PC-9 (cell line): ENCODE measurements at regions of chr1 and their contacts with region 1.

Region 1: GRCh38 chr1:234599617-234600417 is 10.2 kb downstream of the IRF2BP2 start:
- DNase-seq: peak; percentile 69 to 89
- H3K4me3 ChIP-seq: peak overlapping the region; percentile 62
- H3K27ac ChIP-seq: peak overlapping the region; percentile 99
- H3K4me1 ChIP-seq: peaks cover 61% of the 10 kb centered on the region
- H3K27me3 ChIP-seq: no peaks in the 10 kb centered on the region
- CTCF ChIP-seq: no peak; the same call in 1 of the 2 replicates

Region 2: GRCh38 chr1:234486498-234487448 is 113.0 kb before region 1 on chr1:
- CTCF ChIA-PET with region 1: no interaction called
- POLR2A ChIA-PET with region 1: no interaction called
- intact Hi-C with region 1: loop called (anchors 1 kb)
- DNase-seq: peak; percentile 49 to 73
- H3K4me3 ChIP-seq: no peak overlapping the region
- H3K27ac ChIP-seq: 0 out of 2 replicates have a peak overlapping the region, but pooled peaks have one; percentile 26
- H3K4me1 ChIP-seq: peaks cover 35% of the 10 kb centered on the region
- H3K27me3 ChIP-seq: no peaks in the 10 kb centered on the region
- CTCF ChIP-seq: peak; percentile 71

Region 3: GRCh38 chr1:234525156-234525799 is 74.5 kb before region 1 on chr1:
- CTCF ChIA-PET with region 1: no interaction called
- POLR2A ChIA-PET with region 1: interaction called, 14 read pairs
- intact Hi-C with region 1: no loop called
- DNase-seq: no peak
- H3K4me3 ChIP-seq: no peak overlapping the region
- H3K27ac ChIP-seq: no peak overlapping the region
- H3K4me1 ChIP-seq: peaks cover 39% of the 10 kb centered on the region
- H3K27me3 ChIP-seq: no peaks in the 10 kb centered on the region
- CTCF ChIP-seq: no peak

Region 4: GRCh38 chr1:234572961-234573360 is 26.9 kb before region 1 on chr1:
- CTCF ChIA-PET with region 1: no interaction called
- POLR2A ChIA-PET with region 1: interaction called, 16 read pairs
- intact Hi-C with region 1: no loop called
- DNase-seq: peak in 1 of 2 experiments; percentile 35
- H3K4me3 ChIP-seq: no peak overlapping the region
- H3K27ac ChIP-seq: no peak overlapping the region
- H3K4me1 ChIP-seq: peaks cover 25% of the 10 kb centered on the region
- H3K27me3 ChIP-seq: no peaks in the 10 kb centered on the region
- CTCF ChIP-seq: no peak

Region 5: DNA sequence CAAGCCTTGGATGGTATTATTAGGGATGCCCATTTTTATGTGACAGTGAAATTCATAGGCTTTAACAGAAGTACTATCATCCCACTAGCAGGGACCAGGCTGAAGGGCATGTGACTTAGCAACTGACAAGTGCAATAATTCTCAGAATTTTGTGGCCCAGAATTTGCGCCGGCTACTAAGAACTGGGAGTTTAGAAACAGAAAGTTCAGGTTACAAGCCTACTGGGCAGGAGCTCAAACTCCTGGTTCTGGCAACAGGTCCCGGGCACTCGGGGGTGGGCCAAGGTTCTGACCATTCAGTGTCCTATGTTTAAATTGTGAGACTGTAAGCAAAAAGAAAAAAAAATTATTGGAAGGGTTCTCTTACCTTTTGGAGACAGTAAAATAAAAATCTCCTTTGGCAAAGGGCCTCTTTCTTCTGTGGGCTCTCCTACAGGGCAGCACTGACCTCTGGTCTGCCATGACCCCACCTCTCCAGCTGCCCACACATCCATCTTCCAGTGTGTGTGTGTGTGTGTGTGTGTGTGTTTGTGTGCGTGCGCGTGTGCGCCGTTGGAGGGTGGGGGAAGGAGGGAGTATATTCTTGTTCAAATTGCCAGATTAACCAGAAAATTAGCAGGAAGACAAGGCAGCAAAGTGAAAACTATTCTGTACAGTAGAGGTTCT is 15.9 kb before region 1 on chr1:
- CTCF ChIA-PET with region 1: no interaction called
- POLR2A ChIA-PET with region 1: no interaction called
- intact Hi-C with region 1: no loop called
- DNase-seq: no peak
- H3K4me3 ChIP-seq: no peak overlapping the region
- H3K27ac ChIP-seq: no peak overlapping the region
- H3K4me1 ChIP-seq: no peaks in the 10 kb centered on the region
- H3K27me3 ChIP-seq: no peaks in the 10 kb centered on the region
- CTCF ChIP-seq: no peak

Region 6: GRCh38 chr1:234665975-234666605 is 66.3 kb after region 1 on chr1:
- CTCF ChIA-PET with region 1: no interaction called
- POLR2A ChIA-PET with region 1: no interaction called
- intact Hi-C with region 1: no loop called
- DNase-seq: no peak
- H3K4me3 ChIP-seq: no peak overlapping the region
- H3K27ac ChIP-seq: no peak overlapping the region
- H3K4me1 ChIP-seq: no peaks in the 10 kb centered on the region
- H3K27me3 ChIP-seq: no peaks in the 10 kb centered on the region
- CTCF ChIP-seq: no peak

Region 7: DNA sequence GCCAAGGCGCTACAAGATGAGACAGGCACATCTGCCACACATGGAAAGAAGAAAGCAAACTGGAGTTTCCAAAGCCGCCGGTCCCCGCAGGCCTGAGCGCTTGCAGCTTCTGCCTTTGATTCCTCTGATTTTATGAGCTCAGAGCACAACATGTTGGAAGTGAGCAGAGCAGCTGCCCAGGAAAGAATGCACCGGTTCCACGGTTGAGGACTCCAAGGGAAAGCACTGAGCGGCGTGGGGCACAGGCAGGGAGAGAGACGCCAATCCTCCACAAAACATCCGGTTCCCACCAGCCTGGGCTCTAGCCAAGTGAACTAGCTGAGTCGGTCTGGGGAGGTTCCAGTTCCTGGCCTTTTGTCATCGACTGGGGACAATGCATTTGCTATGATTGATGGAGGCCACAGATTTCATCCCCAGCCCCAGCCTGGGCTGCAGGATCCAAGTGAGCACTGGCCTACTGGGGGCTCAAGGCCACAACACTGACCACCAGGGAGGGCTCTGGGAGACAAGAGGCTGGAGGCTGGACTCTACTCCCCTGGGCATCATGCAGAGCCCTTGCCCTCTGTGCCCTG is 263.2 kb after region 1 on chr1:
- CTCF ChIA-PET with region 1: no interaction called
- POLR2A ChIA-PET with region 1: no interaction called
- intact Hi-C with region 1: loop called (anchors 2 kb)
- DNase-seq: no peak
- H3K4me3 ChIP-seq: no peak overlapping the region
- H3K27ac ChIP-seq: no peak overlapping the region
- H3K4me1 ChIP-seq: peaks cover 56% of the 10 kb centered on the region
- H3K27me3 ChIP-seq: no peaks in the 10 kb centered on the region
- CTCF ChIP-seq: no peak

Region 8: DNA sequence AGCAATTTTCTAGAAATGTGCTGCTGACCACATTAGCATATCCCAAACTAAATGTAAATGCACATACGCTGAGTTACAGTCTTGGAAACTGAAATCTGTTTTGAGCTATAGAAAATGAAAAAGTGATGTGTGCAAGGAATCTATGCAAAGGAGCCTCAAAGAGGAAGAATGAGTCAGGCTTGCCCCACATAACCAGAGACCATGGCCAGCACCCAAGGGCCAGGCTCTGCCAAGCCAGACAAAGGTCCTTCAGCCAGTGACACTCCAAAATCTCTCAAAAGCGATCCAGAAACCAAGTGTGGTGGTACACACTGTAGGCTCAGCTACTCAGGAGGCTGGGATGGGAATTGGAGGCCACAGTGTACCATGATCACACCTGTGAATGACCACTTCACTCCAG is 333.7 kb after region 1 on chr1:
- CTCF ChIA-PET with region 1: no interaction called
- POLR2A ChIA-PET with region 1: no interaction called
- intact Hi-C with region 1: no loop called
- DNase-seq: peak; percentile 43 to 69
- H3K4me3 ChIP-seq: no peak overlapping the region
- H3K27ac ChIP-seq: peak overlapping the region; percentile 44; the same call in 1 of the 2 replicates
- H3K4me1 ChIP-seq: peaks cover 18% of the 10 kb centered on the region
- H3K27me3 ChIP-seq: no peaks in the 10 kb centered on the region
- CTCF ChIP-seq: no peak